Heart left ventricle (tissue), 16 donors: ENCODE measurements at regions of chr22 and their contacts with region 1.

Region 1: GRCh38 chr22:31637938-31638618 is 23.9 kb downstream of the PISD start:
- DNase-seq: peak in 4 of 5 donors; percentile 53 to 62 (median 57)
- ATAC-seq: peak; percentile 16 to 79 (median 70)
- H3K4me3 ChIP-seq: peak overlapping the region in 9 of 12 donors; percentile 17 to 63 (median 35)
- H3K27ac ChIP-seq: peak overlapping the region; percentile 42 to 97 (median 73)
- H3K4me1 ChIP-seq: peaks cover 0 to 53% (median 19%) of the 10 kb centered on the region in 12 donors
- H3K27me3 ChIP-seq: no peaks in the 10 kb centered on the region
- CTCF ChIP-seq: no peak
- POLR2A ChIP-seq: no peak

Region 2: GRCh38 chr22:31561238-31561887 is 76.7 kb before region 1 on chr22:
- intact Hi-C with region 1: loop called in 9 of 10 experiments (anchors 1 to 5 kb)
- DNase-seq: peak; percentile 57 to 74 (median 69)
- ATAC-seq: peak; percentile 83 to 98 (median 96)
- H3K4me3 ChIP-seq: no peak overlapping the region
- H3K27ac ChIP-seq: no peak overlapping the region
- H3K4me1 ChIP-seq: peaks cover 0 to 6% (median 0%) of the 10 kb centered on the region in 12 donors
- H3K27me3 ChIP-seq: no peaks in the 10 kb centered on the region
- CTCF ChIP-seq: peak; percentile 59 to 79 (median 68)
- POLR2A ChIP-seq: no peak

Region 3: DNA sequence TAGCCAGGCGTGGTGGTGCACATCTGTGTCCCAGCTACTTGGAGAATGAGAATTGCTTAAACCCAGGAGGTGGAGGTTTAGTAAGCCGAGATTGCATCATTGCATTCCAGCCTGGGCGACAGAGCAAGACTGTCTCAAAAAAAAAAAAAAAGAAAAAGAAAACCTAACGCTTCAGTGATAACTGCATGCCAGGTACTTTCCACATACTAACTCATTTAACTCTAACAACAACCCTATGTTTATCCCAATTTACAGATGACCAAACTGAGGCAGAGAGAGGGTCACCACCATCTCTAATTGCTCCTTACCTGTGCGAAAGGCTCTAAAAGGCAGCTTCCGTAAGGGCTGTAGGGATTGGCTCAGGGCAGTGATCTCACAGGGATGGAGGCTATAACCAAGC is 12.3 kb after region 1 on chr22:
- intact Hi-C with region 1: loop called in 1 of 10 experiments (anchors 1 kb)
- DNase-seq: no peak
- ATAC-seq: peak in 2 of 4 donors; percentile 33 to 41
- H3K4me3 ChIP-seq: no peak overlapping the region
- H3K27ac ChIP-seq: no peak overlapping the region
- H3K4me1 ChIP-seq: peaks cover 0 to 20% (median 0%) of the 10 kb centered on the region in 12 donors
- H3K27me3 ChIP-seq: no peaks in the 10 kb centered on the region
- CTCF ChIP-seq: no peak
- POLR2A ChIP-seq: no peak

Region 4: DNA sequence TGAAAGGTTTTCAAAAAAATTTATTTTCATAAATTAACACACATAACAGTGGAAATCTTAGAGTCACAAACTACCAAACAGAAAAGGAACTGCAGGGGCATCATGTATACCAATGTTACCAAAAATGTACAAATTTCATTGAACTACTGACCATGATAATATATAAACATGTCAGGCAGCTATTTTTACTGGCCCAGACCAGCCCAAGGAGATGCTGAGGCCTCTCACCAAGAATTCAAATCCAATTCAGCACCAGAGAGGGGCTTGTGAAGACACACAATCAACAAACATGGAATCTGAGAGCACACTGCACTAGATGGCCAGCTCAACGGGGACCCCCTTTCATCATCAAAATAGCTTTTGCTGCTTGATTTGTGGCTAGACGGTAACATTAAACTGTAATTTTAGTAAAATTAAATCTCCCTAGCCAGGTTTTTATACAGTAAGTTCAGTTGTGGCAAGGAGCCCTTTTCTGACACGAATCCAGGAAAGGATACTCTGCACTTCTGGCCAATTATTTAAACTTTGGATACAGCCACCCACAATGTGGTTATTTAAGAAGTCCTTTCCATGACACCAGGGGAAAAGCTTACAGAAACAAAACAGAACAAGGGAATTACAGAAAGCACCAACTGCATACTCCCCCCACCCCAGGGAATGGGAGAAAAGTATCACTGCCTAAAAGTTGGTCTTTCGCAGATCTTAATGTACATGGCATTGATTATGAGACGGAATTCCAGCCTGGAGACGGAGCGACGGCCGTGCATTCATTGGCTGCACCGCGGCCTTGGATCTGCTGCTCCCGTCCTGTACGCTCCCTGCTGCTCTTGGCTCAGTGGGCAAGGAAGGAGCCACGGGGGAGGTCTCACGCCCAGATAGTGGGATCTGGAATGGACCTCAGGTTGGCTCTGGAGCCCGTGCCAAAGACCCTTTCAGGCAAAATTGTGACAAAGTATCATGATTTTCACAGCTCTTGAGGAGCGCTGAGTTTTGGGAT is 43.6 kb after region 1 on chr22:
- intact Hi-C with region 1: no loop called
- DNase-seq: no peak
- ATAC-seq: no peak
- H3K4me3 ChIP-seq: no peak overlapping the region
- H3K27ac ChIP-seq: peak overlapping the region in 2 of 12 donors; percentile 6 to 64
- H3K4me1 ChIP-seq: peaks cover 0 to 21% (median 2%) of the 10 kb centered on the region in 12 donors
- H3K27me3 ChIP-seq: no peaks in the 10 kb centered on the region
- CTCF ChIP-seq: no peak
- POLR2A ChIP-seq: no peak